AG04450 (cell line): ENCODE measurements at regions of chr10 and their contacts with region 1.

Region 1: GRCh38 chr10:90592638-90593302 is 265.1 kb downstream of the HTR7 start:
- DNase-seq: peak; percentile 51
- H3K4me3 ChIP-seq: no peak overlapping the region
- H3K27ac ChIP-seq: no peak overlapping the region
- H3K27me3 ChIP-seq: peaks cover 16% of the 10 kb centered on the region
- CTCF ChIP-seq: peak; percentile 78

Region 2: GRCh38 chr10:89793649-89794254 is 799.0 kb before region 1 on chr10:
- CTCF ChIA-PET with region 1: interaction called, 14 read pairs
- POLR2A ChIA-PET with region 1: no interaction called
- DNase-seq: peak; percentile 55
- H3K4me3 ChIP-seq: no peak overlapping the region
- H3K27ac ChIP-seq: no peak overlapping the region
- H3K27me3 ChIP-seq: no peaks in the 10 kb centered on the region
- CTCF ChIP-seq: peak; percentile 86

Region 3: DNA sequence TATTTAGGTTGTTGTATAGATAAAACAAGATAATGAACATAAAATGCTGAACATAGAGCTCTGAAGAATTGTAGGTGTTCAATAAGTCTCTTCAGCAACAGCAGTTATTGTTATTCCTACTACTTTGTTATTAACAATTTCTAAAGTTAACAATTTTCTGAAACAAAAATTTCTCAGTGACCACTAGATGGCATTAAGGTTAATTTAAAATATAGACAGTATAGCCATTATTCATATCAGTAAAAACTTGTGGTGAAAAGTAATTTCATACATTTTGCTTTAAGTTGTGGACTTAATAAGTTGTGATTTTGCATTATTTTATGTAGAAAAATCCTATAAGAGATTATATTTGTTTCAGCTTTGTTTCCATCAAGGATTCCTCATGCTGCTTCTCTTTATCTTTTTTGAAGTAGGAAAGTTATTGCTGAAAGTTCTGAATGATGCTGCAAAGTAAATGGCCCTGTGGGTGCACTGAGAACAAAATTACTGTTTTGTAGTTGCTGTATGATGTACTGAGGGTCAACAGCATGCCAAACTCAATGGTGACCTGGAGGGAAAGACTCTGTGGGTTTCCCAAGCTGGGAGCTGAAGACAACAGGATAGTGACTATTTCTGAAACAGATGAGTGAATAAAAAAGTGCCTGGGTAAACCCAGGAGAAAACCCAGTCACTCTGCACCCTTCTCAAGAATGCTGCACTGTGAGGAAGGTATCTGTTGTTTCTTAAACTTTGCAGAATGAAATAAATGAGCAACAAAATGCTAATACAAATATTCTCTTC is 637.8 kb before region 1 on chr10:
- CTCF ChIA-PET with region 1: interaction called, 19 read pairs
- POLR2A ChIA-PET with region 1: no interaction called
- DNase-seq: no peak
- H3K4me3 ChIP-seq: no peak overlapping the region
- H3K27ac ChIP-seq: no peak overlapping the region
- H3K27me3 ChIP-seq: peaks cover 2% of the 10 kb centered on the region
- CTCF ChIP-seq: peak; percentile 29; the same call in 1 of the 2 replicates

Region 4: DNA sequence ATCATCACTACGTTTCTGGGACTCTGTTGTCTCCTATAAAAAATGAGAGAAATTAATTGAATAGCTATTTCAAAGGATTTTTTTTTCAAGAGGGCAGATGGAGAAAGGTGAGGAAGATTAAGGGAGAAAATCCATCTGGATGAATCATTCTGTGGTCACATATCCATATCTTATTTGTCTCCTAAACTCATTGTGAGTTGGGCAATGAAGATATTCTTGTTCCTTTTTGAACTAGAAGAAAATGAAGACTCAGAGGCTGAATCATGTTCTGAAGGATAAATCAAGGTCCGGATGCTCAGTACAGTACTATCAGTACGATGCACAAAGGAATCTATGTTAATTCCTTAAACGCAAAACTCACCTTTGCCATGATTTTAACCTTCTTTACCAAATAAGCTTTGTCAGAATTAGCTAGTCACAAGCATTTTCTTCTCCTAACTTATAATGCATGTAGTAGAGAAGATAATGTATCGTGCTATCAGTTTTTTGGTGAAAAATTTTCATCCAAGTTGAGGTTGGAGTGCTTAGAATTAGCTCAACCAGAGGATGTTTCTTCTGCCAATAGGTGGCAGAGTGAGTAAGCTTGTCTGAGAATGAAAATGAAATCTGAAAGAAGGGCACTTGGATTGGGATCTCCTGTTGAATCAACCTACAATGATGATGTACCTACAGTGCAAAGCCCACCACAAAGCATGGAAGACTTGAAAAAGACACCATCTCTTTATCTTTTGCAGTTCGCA is 444.5 kb before region 1 on chr10:
- CTCF ChIA-PET with region 1: interaction called, 39 read pairs
- POLR2A ChIA-PET with region 1: no interaction called
- DNase-seq: no peak
- H3K4me3 ChIP-seq: no peak overlapping the region
- H3K27ac ChIP-seq: no peak overlapping the region
- H3K27me3 ChIP-seq: peaks cover 2% of the 10 kb centered on the region
- CTCF ChIP-seq: peak; percentile 60

Region 5: GRCh38 chr10:90288391-90288933 is 304.3 kb before region 1 on chr10:
- CTCF ChIA-PET with region 1: interaction called, 129 read pairs
- POLR2A ChIA-PET with region 1: no interaction called
- DNase-seq: peak; percentile 30
- H3K4me3 ChIP-seq: no peak overlapping the region
- H3K27ac ChIP-seq: no peak overlapping the region
- H3K27me3 ChIP-seq: no peaks in the 10 kb centered on the region
- CTCF ChIP-seq: peak; percentile 68